ENCODE measurements at regions of chr18 and their contacts with region 1.

Region 1: DNA sequence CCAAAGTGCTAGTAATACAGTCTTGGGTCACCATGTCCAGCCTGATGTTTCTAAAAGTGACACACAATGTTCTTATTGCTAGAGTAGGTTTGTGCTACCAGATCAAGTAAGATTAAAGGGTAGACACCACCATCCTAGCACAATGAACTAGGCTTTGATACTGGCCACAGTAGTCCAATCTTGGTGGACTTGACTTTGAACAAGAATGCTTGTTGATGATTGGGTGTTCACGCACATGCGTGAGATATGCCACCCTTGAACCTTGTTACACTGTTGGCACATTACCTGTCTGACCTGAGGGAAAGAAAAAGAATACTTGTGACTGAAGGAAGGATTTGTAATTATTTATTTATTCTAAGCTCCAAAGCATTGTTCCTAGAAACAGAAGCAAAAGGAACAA is 72.1 kb upstream of the EMILIN2 start:
- DNase-seq: no peak
- ATAC-seq: no peak
- H3K4me3 ChIP-seq: no peak overlapping the region
- H3K27ac ChIP-seq: no peak overlapping the region
- H3K4me1 ChIP-seq: no peaks in the 10 kb centered on the region
- H3K27me3 ChIP-seq: no peaks in the 10 kb centered on the region
- CTCF ChIP-seq: no peak
- POLR2A ChIP-seq: no peak
- RAD21 ChIP-seq: no peak

Region 2: DNA sequence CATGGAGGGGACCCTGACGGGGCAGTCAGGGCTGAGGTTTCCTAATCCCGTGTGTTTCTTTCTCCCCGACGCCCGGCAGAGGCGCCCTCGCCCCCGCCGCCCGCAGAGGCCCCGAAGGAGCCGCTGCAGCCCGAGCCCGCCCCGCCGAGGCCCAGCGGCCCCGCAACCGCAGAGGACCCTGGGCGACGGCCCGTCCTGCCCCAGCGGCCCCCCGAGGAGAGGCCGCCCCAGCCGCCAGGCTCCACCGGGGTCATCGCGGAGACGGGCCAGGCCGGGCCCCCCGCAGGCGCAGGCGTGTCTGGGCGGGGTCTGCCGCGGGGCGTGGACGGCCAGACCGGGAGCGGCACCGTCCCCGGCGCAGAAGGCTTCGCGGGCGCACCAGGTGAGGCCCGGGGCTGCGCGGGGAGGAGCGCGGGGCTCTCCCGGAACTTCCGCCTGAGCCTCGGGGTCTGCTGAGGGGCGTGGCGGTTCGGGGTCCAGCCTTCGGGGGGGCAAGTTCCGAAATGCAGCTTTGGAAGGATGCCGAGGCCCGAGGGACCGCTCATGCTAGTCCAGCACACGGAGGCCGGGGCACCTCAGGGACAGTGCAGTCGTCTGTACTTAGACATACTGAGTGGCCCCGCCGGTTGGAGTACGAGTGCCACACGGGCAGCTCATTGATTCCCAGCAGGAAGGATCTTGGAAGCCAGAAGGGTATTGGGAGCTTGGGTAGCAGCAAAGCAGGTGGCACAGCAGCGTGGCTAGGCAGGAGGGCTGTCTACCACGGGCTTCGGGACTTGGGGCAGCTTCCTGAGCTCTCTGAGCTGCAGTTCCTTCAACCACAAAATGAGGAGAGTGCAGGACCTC is 132.3 kb after region 1 on chr18:
- CTCF ChIA-PET with region 1: no interaction called
- POLR2A ChIA-PET with region 1: no interaction called
- RAD21 ChIA-PET with region 1: no interaction called
- intact Hi-C with region 1: loop called (anchors 5 kb)
- DNase-seq: no peak
- ATAC-seq: peak; percentile 76
- H3K4me3 ChIP-seq: peak overlapping the region; percentile 64 to 86
- H3K27ac ChIP-seq: peak overlapping the region; percentile 96
- H3K4me1 ChIP-seq: peaks cover 7 to 28% of the 10 kb centered on the region in 2 experiments; a peak in 3 of 4 replicates
- H3K27me3 ChIP-seq: no peaks in the 10 kb centered on the region
- CTCF ChIP-seq: peak in 2 of 3 experiments; percentile 20 to 27; a peak in 2 of 6 replicates
- POLR2A ChIP-seq: peak; percentile 49
- RAD21 ChIP-seq: no peak

Measured in HCT116 (cell line).